Activated CD8-positive, alpha-beta memory T cell treated with anti-CD3 and anti-CD28 coated beads, Interleukin-2, amount 10 ng/mL, durations not matched to agents 7 days and 5 days (primary cell): ENCODE measurements at regions of chr7 and their contacts with region 1.

Region 1: GRCh38 chr7:50349963-50350944 is 45.7 kb downstream of the IKZF1 start:
- DNase-seq: peak; percentile 92
- ATAC-seq: peak; percentile 75
- H3K4me3 Mint-ChIP-seq: peak overlapping the region; percentile 64
- H3K27ac Mint-ChIP-seq: peak overlapping the region; percentile 94
- H3K4me1 Mint-ChIP-seq: peaks cover 96% of the 10 kb centered on the region
- H3K27me3 Mint-ChIP-seq: no peaks in the 10 kb centered on the region

Region 2: GRCh38 chr7:50304158-50304910 is 45.9 kb before region 1 on chr7 and contains the start of gene IKZF1:
- CTCF ChIA-PET with region 1: interaction called, 36 read pairs
- DNase-seq: peak; percentile 71
- ATAC-seq: peak; percentile 40
- H3K4me3 Mint-ChIP-seq: peak within 1 kb of the TSS; percentile 91
- H3K27ac Mint-ChIP-seq: peak within 1 kb of the TSS; percentile 97
- H3K4me1 Mint-ChIP-seq: peaks cover 33% of the 10 kb centered on the region
- H3K27me3 Mint-ChIP-seq: no peaks in the 10 kb centered on the region
- total RNA-seq, gene IKZF1: 348 to 374 TPM

Region 3: DNA sequence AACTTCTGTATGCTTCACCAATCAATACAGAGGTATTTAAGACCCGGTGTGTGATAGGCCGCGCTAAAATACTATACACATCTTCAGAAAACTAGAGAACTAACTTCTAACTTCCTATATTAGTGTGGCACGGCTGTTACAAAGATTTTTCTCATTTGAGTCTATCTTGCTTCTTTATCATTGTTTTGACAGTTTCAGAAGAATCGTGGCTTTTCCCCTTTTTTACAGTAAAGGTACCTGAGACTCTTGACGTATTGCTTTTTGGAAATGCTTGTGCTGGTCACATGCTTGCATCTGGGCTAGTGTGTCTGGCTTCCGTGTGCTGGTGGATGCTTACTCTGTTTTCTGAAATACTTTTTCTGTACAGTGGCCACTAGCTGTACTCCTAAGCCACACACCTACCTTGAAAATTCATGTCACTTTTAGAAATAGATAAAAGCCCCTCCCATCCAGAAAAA is 33.0 kb before region 1 on chr7:
- CTCF ChIA-PET with region 1: interaction called, 36 read pairs
- DNase-seq: peak; percentile 77
- ATAC-seq: peak; percentile 75
- H3K4me3 Mint-ChIP-seq: peak overlapping the region; percentile 91
- H3K27ac Mint-ChIP-seq: peak overlapping the region; percentile 97
- H3K4me1 Mint-ChIP-seq: peaks cover 94% of the 10 kb centered on the region
- H3K27me3 Mint-ChIP-seq: no peaks in the 10 kb centered on the region

Region 4: GRCh38 chr7:50335795-50336754 is 14.2 kb before region 1 on chr7:
- CTCF ChIA-PET with region 1: interaction called, 46 read pairs
- DNase-seq: peak; percentile 92
- ATAC-seq: peak; percentile 45
- H3K4me3 Mint-ChIP-seq: no peak overlapping the region
- H3K27ac Mint-ChIP-seq: no peak overlapping the region
- H3K4me1 Mint-ChIP-seq: peaks cover 30% of the 10 kb centered on the region
- H3K27me3 Mint-ChIP-seq: no peaks in the 10 kb centered on the region

Region 5: GRCh38 chr7:50379082-50379481 is 28.8 kb after region 1 on chr7:
- CTCF ChIA-PET with region 1: no interaction called
- DNase-seq: no peak
- ATAC-seq: no peak
- H3K4me3 Mint-ChIP-seq: no peak overlapping the region
- H3K27ac Mint-ChIP-seq: peak overlapping the region; percentile 50
- H3K4me1 Mint-ChIP-seq: peaks cover 54% of the 10 kb centered on the region
- H3K27me3 Mint-ChIP-seq: no peaks in the 10 kb centered on the region

Region 6: GRCh38 chr7:50632561-50633413 is 282.5 kb after region 1 on chr7:
- CTCF ChIA-PET with region 1: no interaction called
- DNase-seq: peak; percentile 74
- ATAC-seq: peak; percentile 86
- H3K4me3 Mint-ChIP-seq: no peak overlapping the region
- H3K27ac Mint-ChIP-seq: peak overlapping the region; percentile 48
- H3K4me1 Mint-ChIP-seq: peaks cover 9% of the 10 kb centered on the region
- H3K27me3 Mint-ChIP-seq: peaks cover 39% of the 10 kb centered on the region